PC-9 (cell line): ENCODE measurements at regions of chr14 and their contacts with region 1.

Region 1: GRCh38 chr14:55354500-55354899 is 57.1 kb downstream of the ATG14 start:
- DNase-seq: peak in 1 of 2 experiments; percentile 29
- H3K4me3 ChIP-seq: no peak overlapping the region
- H3K27ac ChIP-seq: no peak overlapping the region
- H3K4me1 ChIP-seq: no peaks in the 10 kb centered on the region
- H3K27me3 ChIP-seq: no peaks in the 10 kb centered on the region
- CTCF ChIP-seq: peak; percentile 64

Region 2: DNA sequence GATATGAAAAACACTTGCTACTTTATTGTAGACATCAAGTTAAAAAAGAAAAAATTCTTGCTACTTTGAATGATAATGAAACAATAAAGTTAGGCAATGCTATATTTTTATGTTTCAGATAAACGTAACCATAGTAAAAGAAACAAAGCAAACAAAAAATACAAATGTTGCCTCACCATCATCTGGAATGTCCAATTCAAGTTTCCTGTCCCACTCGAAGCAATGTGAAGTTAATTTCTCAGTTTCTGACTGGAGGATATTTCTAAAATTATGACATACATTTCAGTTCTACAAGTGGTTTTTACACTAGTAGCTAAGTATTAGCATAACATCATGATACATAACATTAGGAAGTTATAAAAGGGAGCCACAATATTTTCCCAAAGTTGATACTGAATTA is 184.0 kb before region 1 on chr14:
- CTCF ChIA-PET with region 1: no interaction called
- POLR2A ChIA-PET with region 1: no interaction called
- intact Hi-C with region 1: no loop called
- DNase-seq: no peak
- H3K4me3 ChIP-seq: no peak overlapping the region
- H3K27ac ChIP-seq: no peak overlapping the region
- H3K4me1 ChIP-seq: no peaks in the 10 kb centered on the region
- H3K27me3 ChIP-seq: no peaks in the 10 kb centered on the region
- CTCF ChIP-seq: no peak

Region 3: DNA sequence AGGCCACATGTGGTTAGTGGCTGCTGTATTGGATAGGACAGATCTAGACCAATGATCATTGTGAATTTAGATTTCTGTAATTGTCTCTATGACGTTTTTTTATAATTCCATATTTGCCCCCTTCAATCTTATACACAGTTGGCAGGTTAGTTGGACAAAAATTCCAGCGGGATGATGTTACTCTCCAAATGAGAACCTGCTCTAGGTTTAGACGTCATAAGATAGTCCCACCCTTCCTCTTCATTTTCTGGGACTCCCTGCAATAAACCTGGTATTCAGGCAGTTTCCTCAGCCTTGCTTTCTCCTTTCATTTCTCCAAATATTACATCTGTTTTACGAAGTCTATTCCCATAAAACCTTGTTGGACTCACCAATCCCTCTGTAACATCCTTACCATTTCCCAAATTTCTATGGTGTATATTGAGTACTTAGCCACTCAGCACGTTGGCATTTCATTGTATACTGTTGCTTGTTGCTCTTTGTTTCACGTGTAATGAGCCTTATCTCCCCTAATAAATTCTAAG is 73.1 kb before region 1 on chr14:
- CTCF ChIA-PET with region 1: no interaction called
- POLR2A ChIA-PET with region 1: interaction called, 46 read pairs
- intact Hi-C with region 1: no loop called
- DNase-seq: no peak
- H3K4me3 ChIP-seq: no peak overlapping the region
- H3K27ac ChIP-seq: no peak overlapping the region
- H3K4me1 ChIP-seq: no peaks in the 10 kb centered on the region
- H3K27me3 ChIP-seq: no peaks in the 10 kb centered on the region
- CTCF ChIP-seq: no peak

Region 4: DNA sequence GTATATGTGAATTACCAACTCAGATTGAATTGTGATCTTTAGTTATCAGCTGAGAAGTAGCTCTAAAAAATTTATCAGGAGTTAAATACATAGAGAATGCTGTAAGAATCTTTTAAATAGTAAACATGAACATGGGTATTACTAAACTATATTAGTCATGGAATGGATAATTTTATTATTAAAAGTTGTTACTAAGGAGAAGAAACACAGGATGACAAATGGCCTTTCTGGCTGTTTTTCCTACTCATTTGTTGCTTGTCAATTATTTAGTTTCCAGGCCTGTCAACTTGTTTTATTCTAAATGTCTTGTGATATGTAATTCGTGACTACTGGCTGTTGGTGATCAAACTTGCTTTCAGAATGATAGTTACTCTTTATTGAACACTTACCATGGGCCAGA is 284.2 kb after region 1 on chr14:
- CTCF ChIA-PET with region 1: no interaction called
- POLR2A ChIA-PET with region 1: no interaction called
- intact Hi-C with region 1: no loop called
- DNase-seq: no peak
- H3K4me3 ChIP-seq: no peak overlapping the region
- H3K27ac ChIP-seq: no peak overlapping the region
- H3K4me1 ChIP-seq: no peaks in the 10 kb centered on the region
- H3K27me3 ChIP-seq: no peaks in the 10 kb centered on the region
- CTCF ChIP-seq: no peak